Calu3 (cell line): ENCODE measurements at regions of chr15 and their contacts with region 1.

Region 1: GRCh38 chr15:51874751-51875528 is 45.5 kb downstream of the TMOD3 start:
- DNase-seq: peak; percentile 54
- H3K4me3 Mint-ChIP-seq: peak overlapping the region; percentile 51
- H3K27ac Mint-ChIP-seq: peak overlapping the region; percentile 75
- H3K4me1 Mint-ChIP-seq: peaks cover 48% of the 10 kb centered on the region
- H3K27me3 Mint-ChIP-seq: no peaks in the 10 kb centered on the region
- CTCF ChIP-seq: no peak

Region 2: DNA sequence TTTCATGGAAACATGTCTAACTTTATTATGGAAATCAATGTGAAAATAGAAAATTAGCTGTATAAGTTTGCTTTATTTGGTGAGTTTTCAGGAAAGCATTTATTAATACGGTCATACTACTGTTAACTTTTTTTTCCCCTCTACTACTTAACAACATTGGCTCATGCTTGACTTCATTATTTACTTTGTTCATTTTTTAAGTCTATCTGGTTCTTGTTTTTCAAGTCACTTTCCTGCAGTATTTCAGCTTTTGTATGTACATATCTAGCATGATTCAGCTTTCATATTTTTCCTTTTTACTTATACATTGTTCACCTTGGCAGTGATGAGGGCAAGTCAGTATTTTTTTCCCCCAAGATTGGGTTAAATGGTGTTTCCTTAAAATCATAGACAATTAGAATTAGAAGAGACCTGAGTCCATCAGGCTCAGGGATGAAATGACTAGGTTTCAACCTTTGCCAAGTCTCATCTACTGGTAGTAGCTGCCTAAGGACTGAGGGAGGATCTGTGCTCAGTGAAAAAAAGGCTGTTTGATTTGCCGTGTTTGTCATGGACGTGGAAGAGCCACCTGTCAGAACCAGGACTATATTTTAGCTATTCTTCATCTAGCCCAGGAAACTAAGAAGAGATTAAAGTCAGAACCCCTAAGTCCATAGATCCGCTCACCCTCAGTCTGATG is 30.1 kb before region 1 on chr15:
- CTCF ChIA-PET with region 1: interaction called, 3 read pairs
- intact Hi-C with region 1: loop called (anchors 2 kb)
- DNase-seq: no peak
- H3K4me3 Mint-ChIP-seq: no peak overlapping the region
- H3K27ac Mint-ChIP-seq: peak overlapping the region; percentile 77
- H3K4me1 Mint-ChIP-seq: peaks cover 76% of the 10 kb centered on the region
- H3K27me3 Mint-ChIP-seq: no peaks in the 10 kb centered on the region
- CTCF ChIP-seq: no peak

Region 3: GRCh38 chr15:51888593-51889195 is 13.8 kb after region 1 on chr15:
- CTCF ChIA-PET with region 1: interaction called, 14 read pairs
- intact Hi-C with region 1: no loop called
- DNase-seq: no peak
- H3K4me3 Mint-ChIP-seq: no peak overlapping the region
- H3K27ac Mint-ChIP-seq: no peak overlapping the region
- H3K4me1 Mint-ChIP-seq: no peaks in the 10 kb centered on the region
- H3K27me3 Mint-ChIP-seq: no peaks in the 10 kb centered on the region
- CTCF ChIP-seq: peak; percentile 36

Region 4: DNA sequence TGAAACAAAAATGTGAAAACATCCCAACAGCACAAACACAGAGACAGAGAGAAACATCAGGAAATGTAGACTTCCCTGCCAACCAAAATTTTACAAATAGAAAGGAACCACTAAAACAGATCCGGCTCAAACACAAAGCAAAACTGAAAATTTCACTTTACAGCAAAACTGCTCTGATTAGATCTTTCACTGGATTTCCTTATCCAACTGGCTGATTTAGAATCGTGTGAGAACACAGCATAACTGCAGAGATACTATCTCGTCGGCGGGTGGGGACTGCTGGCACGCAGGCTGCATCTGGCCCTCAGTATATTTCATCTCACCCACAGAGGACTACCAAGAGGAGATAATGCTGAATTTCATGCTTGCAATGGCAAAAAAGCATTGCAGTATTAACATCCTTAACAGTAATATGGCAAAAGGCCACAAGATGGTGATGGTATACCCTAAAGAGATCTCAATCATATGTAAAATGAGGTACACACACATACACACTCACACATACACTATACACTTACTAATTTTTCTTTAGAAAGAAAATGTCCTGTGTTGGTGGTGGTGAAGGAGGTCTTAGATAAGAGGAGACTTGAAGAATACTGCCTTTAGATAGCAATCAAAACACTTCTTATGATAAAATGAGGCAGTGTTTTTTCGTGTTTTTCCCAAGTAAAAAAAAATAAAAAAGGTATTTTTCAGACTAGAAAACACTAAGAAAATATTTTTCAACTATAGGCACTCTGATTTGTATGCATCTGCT is 107.3 kb after region 1 on chr15:
- CTCF ChIA-PET with region 1: no interaction called
- intact Hi-C with region 1: no loop called
- DNase-seq: peak; percentile 13
- H3K4me3 Mint-ChIP-seq: peak overlapping the region; percentile 28
- H3K27ac Mint-ChIP-seq: no peak overlapping the region
- H3K4me1 Mint-ChIP-seq: peaks cover 14% of the 10 kb centered on the region
- H3K27me3 Mint-ChIP-seq: no peaks in the 10 kb centered on the region
- CTCF ChIP-seq: peak; percentile 48